Breast epithelium (tissue), 4 donors: ENCODE measurements at regions of chr7 and their contacts with region 1.

Region 1: DNA sequence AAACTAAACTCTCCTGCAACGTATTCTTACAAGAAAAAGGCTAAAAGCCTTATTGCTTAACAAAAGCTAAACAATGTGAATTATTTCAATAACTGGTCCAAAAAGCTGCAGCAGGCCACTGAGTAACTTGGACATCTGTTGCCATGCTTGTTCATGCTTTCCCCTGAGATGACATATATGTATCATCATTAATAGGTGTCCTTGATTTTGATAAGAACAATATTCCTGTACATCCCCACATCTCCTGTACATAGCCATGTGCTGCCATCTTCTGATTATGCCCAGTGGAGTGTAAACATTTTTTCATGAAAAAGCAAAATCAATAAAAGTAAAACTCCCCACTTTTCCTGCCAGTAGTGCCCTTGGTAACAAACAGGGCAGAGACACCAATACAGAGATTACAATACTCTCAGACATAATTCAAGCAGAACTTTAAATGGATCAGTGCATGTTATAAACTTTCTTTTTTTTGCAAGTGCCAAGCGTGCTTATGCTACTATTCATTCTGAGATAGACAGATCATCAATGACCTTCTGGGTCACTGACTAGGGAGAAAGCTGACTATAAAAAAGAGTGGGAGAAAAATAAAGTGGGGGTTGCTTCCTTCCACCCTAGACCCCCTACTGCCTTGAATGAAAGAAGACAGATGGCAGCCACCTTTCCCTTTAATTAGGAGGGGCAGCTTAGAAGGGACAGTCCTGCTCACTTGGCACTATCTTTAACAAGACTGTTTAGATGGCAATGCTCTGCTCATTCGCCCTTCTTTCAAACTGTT is 205.5 kb upstream of the KLF14 start:
- DNase-seq: no peak
- H3K4me3 ChIP-seq: peak overlapping the region; percentile 2 to 52 (median 51)
- H3K27ac ChIP-seq: peak overlapping the region; percentile 70 to 94
- H3K4me1 ChIP-seq: peaks cover 0 to 6% of the 10 kb centered on the region in 2 donors
- H3K27me3 ChIP-seq: no peaks in the 10 kb centered on the region
- CTCF ChIP-seq: no peak
- POLR2A ChIP-seq: no peak

Region 2: GRCh38 chr7:130400120-130400591 is 539.4 kb before region 1 on chr7:
- intact Hi-C with region 1: loop called (anchors 5 kb)
- DNase-seq: no peak
- H3K4me3 ChIP-seq: no peak overlapping the region
- H3K27ac ChIP-seq: peak overlapping the region; percentile 23 to 76
- H3K4me1 ChIP-seq: peaks cover 0 to 8% of the 10 kb centered on the region in 2 donors
- H3K27me3 ChIP-seq: no peaks in the 10 kb centered on the region
- CTCF ChIP-seq: no peak
- POLR2A ChIP-seq: no peak

Region 3: GRCh38 chr7:132422502-132423111 is 1483.1 kb after region 1 on chr7:
- intact Hi-C with region 1: no loop called
- DNase-seq: no peak
- H3K4me3 ChIP-seq: no peak overlapping the region
- H3K27ac ChIP-seq: peak overlapping the region in 1 of 2 donors; percentile 25
- H3K4me1 ChIP-seq: no peaks in the 10 kb centered on the region
- H3K27me3 ChIP-seq: no peaks in the 10 kb centered on the region
- CTCF ChIP-seq: no peak
- POLR2A ChIP-seq: no peak